Activated CD4-positive, alpha-beta memory T cell treated with anti-CD3 and anti-CD28 coated beads, Interleukin-2, amount 10 ng/mL, durations not matched to agents 7 days and 5 days (primary cell): ENCODE measurements at regions of chr18 and their contacts with region 1.

Region 1: DNA sequence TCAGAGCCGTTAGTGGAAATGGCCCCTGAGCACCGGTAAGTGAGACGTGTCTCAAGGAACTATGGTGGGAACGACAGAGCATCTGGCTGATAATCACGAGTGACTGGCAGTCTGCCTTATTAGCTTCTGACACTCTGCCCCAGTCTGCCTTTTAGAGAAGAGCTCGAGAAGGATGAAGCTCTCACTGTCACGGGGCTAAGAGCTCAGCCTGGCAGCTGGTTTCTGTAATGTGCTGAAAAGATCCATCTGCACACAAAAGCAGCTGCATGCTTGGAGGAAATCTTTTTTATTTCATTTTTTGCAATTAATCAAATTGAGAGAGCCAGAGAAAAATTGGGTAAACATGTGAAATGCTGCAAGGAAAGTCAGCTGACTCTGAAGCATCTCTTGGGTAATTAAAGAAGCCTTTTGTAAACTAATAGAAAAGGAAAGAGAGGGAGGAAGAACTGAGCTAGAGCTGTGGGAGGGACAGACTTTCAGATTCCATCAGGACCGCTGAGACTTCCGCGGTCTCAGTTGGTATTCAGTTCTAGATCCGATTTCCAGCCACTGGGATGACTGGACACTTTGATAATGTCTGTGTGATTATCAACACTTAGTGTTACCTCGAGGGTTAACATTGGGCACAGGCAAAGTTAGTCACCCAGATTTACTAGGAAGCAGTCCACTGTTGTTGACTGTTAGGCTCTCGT is 24.4 kb downstream of the MBP start:
- DNase-seq: no peak
- H3K4me3 Mint-ChIP-seq: peak overlapping the region; percentile 24
- H3K27ac Mint-ChIP-seq: peak overlapping the region; percentile 80
- H3K4me1 Mint-ChIP-seq: peaks cover 94% of the 10 kb centered on the region
- H3K27me3 Mint-ChIP-seq: no peaks in the 10 kb centered on the region

Region 2: DNA sequence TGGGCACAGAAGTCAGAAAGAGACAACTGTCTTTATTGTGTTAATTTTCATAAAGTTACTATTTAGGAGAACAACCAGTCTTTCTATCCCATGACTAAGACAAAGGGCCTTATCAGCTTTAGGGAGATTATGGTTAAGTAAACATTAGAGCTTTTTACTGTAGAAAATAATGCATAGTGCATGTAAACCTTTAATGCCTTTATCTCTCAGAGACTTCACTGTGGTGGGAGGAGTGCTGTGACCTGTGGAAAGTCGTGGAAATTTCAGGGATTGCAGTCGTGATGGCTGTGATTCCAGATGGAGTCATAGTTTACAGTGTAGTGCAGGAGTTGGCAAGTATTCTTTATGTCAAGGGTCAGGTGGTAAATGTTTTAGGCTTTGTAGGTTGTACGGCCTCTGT is 270.0 kb before region 1 on chr18:
- CTCF ChIA-PET with region 1: no interaction called
- POLR2A ChIA-PET with region 1: no interaction called
- DNase-seq: no peak
- H3K4me3 Mint-ChIP-seq: no peak overlapping the region
- H3K27ac Mint-ChIP-seq: no peak overlapping the region
- H3K4me1 Mint-ChIP-seq: peaks cover 11% of the 10 kb centered on the region
- H3K27me3 Mint-ChIP-seq: no peaks in the 10 kb centered on the region

Region 3: GRCh38 chr18:77061946-77062517 is 46.1 kb before region 1 on chr18:
- CTCF ChIA-PET with region 1: interaction called, 10 read pairs
- POLR2A ChIA-PET with region 1: interaction called, 437 read pairs
- DNase-seq: peak; percentile 48
- H3K4me3 Mint-ChIP-seq: peak overlapping the region; percentile 66
- H3K27ac Mint-ChIP-seq: peak overlapping the region; percentile 99
- H3K4me1 Mint-ChIP-seq: peaks cover 89% of the 10 kb centered on the region
- H3K27me3 Mint-ChIP-seq: no peaks in the 10 kb centered on the region

Region 4: GRCh38 chr18:77124452-77124922 is 16.3 kb after region 1 on chr18:
- CTCF ChIA-PET with region 1: interaction called, 20 read pairs
- POLR2A ChIA-PET with region 1: interaction called, 137 read pairs
- DNase-seq: peak; percentile 73
- H3K4me3 Mint-ChIP-seq: peak overlapping the region; percentile 61
- H3K27ac Mint-ChIP-seq: peak overlapping the region; percentile 78
- H3K4me1 Mint-ChIP-seq: peaks cover 84% of the 10 kb centered on the region
- H3K27me3 Mint-ChIP-seq: no peaks in the 10 kb centered on the region

Region 5: GRCh38 chr18:77132371-77133050 is 24.4 kb after region 1 on chr18 and contains the start of gene MBP:
- CTCF ChIA-PET with region 1: interaction called, 8 read pairs
- POLR2A ChIA-PET with region 1: interaction called, 137 read pairs
- DNase-seq: peak; percentile 80
- H3K4me3 Mint-ChIP-seq: peak within 1 kb of the TSS; percentile 96
- H3K27ac Mint-ChIP-seq: peak within 1 kb of the TSS; percentile 88
- H3K4me1 Mint-ChIP-seq: peaks cover 62% of the 10 kb centered on the region
- H3K27me3 Mint-ChIP-seq: no peaks in the 10 kb centered on the region
- total RNA-seq, gene MBP: 81.4 to 95.3 TPM